ENCODE measurements at regions of chr20 and their contacts with region 1.

Region 1: DNA sequence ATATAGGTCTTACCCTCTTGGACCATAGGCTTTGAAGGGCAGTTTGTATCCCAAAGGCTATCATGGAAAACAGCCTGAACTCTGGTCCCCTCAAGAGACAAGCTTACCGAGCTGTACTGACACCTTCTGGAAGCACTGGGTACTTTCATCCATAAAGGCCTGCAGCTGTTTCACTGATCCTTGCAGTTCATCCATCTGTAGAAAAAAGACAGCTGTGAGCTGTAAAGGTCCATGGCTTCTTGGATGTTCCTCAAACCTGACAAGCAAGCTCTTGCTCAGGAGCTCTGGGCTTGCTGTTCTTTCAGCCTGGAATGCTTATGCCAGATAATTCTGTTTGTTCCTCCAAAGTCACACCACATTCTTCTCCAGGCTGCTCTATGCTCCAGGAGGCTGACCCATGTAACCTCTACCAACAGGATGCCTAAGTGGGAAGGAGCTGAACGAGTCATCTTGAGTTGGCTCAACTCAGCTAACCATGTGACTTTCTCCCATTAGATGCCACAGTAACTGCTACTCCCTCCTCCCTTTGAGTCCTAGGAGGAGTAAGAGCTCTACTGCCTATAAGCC is 8.8 kb upstream of the NDRG3 start:
- DNase-seq: no peak
- ATAC-seq: peak; percentile 87 to 91

Region 2: DNA sequence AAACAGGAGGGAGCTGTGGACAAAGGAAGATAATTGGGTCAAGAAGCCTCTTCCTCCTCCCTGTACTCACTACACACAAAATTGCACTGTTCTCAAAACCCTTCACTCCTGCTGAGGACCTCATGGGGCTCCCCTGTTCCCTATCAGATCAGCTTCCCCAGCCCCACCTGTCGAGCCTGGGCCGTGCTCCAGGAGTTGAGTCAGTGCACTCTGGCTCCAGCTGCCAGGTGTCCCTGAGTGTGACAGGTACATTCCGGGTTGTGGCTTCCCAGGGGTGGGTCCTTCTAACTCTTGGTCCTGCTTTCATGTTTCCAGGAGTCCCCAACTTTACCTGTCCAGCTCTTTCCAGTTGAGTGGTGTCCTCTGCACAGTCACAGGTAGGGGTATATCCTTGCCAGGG is 140.8 kb before region 1 on chr20:
- intact Hi-C with region 1: loop called in 1 of 2 experiments (anchors 10 kb)
- DNase-seq: no peak
- ATAC-seq: no peak

Region 3: DNA sequence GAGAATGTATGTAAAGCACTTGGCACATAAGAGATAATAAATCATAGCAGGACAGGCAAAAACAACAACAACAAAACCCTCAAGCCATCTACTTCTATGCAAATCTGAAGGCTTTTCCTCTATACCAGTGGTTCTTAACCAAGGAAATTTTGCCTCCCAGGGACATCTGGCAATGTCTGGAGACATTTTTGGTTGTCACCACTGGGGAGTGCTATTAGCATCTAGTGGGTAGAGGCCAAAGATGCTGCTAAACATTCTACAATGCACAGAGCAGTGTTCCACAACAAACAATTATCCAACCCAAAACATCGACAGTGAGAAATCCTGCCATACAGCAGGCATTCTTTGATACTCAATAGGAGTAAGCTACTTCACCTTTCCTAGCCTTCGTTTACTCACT is 37.1 kb before region 1 on chr20:
- intact Hi-C with region 1: loop called (anchors 5 kb)
- DNase-seq: no peak
- ATAC-seq: no peak